ENCODE measurements at regions of chr15 and their contacts with region 1.

Region 1: DNA sequence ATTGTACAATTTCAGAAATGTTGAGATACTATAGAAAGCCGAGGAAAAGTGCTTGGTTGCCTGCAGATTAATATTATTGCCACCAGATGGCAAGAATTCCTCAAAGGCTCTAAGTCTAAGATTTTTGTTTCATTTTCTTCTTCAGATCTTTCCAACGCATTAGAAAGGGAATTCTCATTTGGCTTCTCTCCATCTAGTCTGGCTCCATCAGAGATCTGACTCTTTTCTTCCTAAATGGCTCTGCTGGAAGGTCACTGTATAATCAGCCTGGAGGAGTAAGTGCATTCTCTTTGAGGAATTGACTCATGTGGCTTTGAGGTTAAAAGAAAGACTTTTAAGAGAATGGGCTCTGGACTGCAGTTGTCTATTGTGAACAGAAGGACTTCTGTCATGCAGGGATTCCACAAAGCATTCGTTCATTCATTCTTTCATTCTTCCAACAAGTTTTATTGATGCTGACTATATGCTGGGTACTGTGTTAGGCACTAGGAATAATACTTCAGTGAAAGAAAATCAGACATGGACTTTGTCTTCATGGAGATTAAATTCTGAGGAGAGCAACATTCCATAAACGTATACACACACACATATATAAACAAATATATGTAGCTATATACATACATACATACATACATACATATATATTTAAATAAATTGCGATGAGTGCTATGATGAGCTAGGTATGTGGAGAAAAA is 55.3 kb downstream of the SLC28A2 start:
- DNase-seq: peak; percentile 53
- ATAC-seq: peak; percentile 51
- H3K4me3 ChIP-seq: peak overlapping the region; percentile 25 to 36 (median 26); a peak in 4 of 6 replicates
- H3K27ac ChIP-seq: peak overlapping the region; percentile 53
- H3K4me1 ChIP-seq: peaks cover 61% of the 10 kb centered on the region
- H3K27me3 ChIP-seq: no peaks in the 10 kb centered on the region
- CTCF ChIP-seq: peak; percentile 66
- EP300 ChIP-seq: no peak
- POLR2A ChIP-seq: no peak
- RAD21 ChIP-seq: peak; percentile 65

Region 2: DNA sequence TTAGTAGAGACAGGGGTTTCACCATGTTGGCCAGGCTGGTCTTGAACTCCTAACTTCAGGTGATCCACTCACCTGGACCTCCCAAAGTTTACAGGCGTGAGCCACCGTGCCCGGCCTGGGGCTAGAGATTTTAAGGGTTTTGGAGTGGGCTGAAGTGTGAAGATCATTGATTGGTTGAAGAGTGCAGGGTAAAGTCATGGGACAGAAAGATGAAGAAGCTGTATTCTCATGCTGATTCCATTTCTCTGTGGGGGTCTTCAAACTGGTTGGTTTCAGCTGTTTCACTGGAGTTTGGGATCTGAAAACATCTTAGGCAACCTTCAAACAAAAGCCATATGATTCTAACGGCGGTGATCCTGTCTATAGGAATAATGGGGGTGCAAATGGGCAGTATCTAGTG is 18.9 kb after region 1 on chr15:
- CTCF ChIA-PET with region 1: no interaction called
- POLR2A ChIA-PET with region 1: no interaction called
- in situ Hi-C with region 1: no loop called
- intact Hi-C with region 1: no loop called
- DNase-seq: no peak
- ATAC-seq: no peak
- H3K4me3 ChIP-seq: no peak overlapping the region
- H3K27ac ChIP-seq: no peak overlapping the region
- H3K4me1 ChIP-seq: peaks cover 25% of the 10 kb centered on the region
- H3K27me3 ChIP-seq: no peaks in the 10 kb centered on the region
- CTCF ChIP-seq: no peak
- EP300 ChIP-seq: no peak
- POLR2A ChIP-seq: no peak
- RAD21 ChIP-seq: no peak

Region 3: GRCh38 chr15:45393851-45394250 is 86.5 kb after region 1 on chr15:
- CTCF ChIA-PET with region 1: interaction called, 23 read pairs
- POLR2A ChIA-PET with region 1: no interaction called
- in situ Hi-C with region 1: no loop called
- intact Hi-C with region 1: loop called (anchors 1 kb)
- DNase-seq: peak; percentile 59
- ATAC-seq: peak; percentile 97
- H3K4me3 ChIP-seq: peak overlapping the region in 2 of 3 experiments; percentile 5 to 34; a peak in 1 of 6 replicates
- H3K27ac ChIP-seq: no peak overlapping the region
- H3K4me1 ChIP-seq: peaks cover 74% of the 10 kb centered on the region
- H3K27me3 ChIP-seq: no peaks in the 10 kb centered on the region
- CTCF ChIP-seq: peak; percentile 67
- EP300 ChIP-seq: peak in 1 of 2 experiments; percentile 17; a peak in 1 of 4 replicates
- POLR2A ChIP-seq: peak in 1 of 2 experiments; percentile 51; a peak in 1 of 4 replicates
- RAD21 ChIP-seq: peak; percentile 64; the same call in 1 of the 2 replicates

Region 4: DNA sequence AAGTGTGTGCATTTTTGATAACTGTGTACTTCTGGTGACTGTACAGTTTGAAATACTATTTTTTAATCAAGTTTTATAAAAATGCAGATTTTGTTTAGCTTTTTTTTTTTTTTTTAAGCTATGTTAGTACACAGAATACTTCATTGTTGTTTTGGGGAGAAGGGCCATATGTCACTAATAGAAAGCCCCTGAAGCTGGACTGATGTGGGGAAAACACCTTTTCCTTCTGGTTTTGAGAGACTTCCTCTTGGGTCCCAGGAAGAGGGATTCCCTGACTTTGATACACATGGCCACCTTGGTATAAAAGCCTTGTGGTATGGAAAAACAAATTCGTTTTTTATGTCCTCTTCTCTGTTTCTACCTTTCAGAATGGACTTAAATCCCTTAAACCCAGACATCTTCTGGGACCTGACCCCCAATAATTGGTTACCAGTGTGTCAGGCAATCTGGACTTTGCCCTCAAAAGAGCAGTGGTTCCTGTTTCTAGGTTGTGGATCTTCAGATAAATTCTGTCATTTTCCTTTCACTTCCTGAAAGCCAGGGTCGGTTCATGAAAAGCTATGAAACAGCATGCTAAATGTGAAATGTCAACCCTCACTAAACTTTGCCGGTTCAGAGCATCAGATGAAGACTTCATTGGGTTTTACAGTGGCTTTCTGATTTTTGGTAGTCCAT is 248.7 kb after region 1 on chr15:
- CTCF ChIA-PET with region 1: no interaction called
- POLR2A ChIA-PET with region 1: no interaction called
- in situ Hi-C with region 1: no loop called
- intact Hi-C with region 1: no loop called
- DNase-seq: no peak
- ATAC-seq: no peak
- H3K4me3 ChIP-seq: no peak overlapping the region
- H3K27ac ChIP-seq: no peak overlapping the region
- H3K4me1 ChIP-seq: peaks cover 7% of the 10 kb centered on the region; the same call in 1 of the 2 replicates
- H3K27me3 ChIP-seq: peaks cover 0 to 3% of the 10 kb centered on the region in 2 experiments; a peak in 2 of 5 replicates
- CTCF ChIP-seq: no peak
- EP300 ChIP-seq: no peak
- POLR2A ChIP-seq: no peak
- RAD21 ChIP-seq: no peak

Measured in HepG2 (cell line).